PC-3 (cell line): ENCODE measurements at regions of chr17 and their contacts with region 1.

Region 1: GRCh38 chr17:42760652-42761581 is at the start of gene RAMP2:
- DNase-seq: no peak
- ATAC-seq: peak; percentile 49
- H3K4me3 ChIP-seq: peak within 1 kb of the TSS; percentile 49; the same call in 1 of the 2 replicates
- H3K27ac ChIP-seq: no peak within 1 kb of the TSS
- H3K4me1 ChIP-seq: no peaks in the 10 kb centered on the region; the same call in 1 of the 2 replicates
- H3K27me3 ChIP-seq: no peaks in the 10 kb centered on the region
- CTCF ChIP-seq: no peak
- total RNA-seq, gene RAMP2: not detected in 2 replicates

Region 2: GRCh38 chr17:42598905-42599304 is 162.0 kb before region 1 on chr17:
- CTCF ChIA-PET with region 1: no interaction called
- POLR2A ChIA-PET with region 1: no interaction called
- intact Hi-C with region 1: no loop called
- DNase-seq: no peak
- ATAC-seq: no peak
- H3K4me3 ChIP-seq: no peak overlapping the region
- H3K27ac ChIP-seq: no peak overlapping the region
- H3K4me1 ChIP-seq: no peaks in the 10 kb centered on the region
- H3K27me3 ChIP-seq: no peaks in the 10 kb centered on the region
- CTCF ChIP-seq: no peak

Region 3: GRCh38 chr17:42744806-42745617 is 15.9 kb before region 1 on chr17 and contains the start of gene EZH1:
- CTCF ChIA-PET with region 1: interaction called, 4 read pairs
- POLR2A ChIA-PET with region 1: no interaction called
- intact Hi-C with region 1: loop called (anchors 1 kb)
- DNase-seq: peak; percentile 88
- ATAC-seq: peak; percentile 90
- H3K4me3 ChIP-seq: peak within 1 kb of the TSS; percentile 65
- H3K27ac ChIP-seq: peak within 1 kb of the TSS; percentile 46
- H3K4me1 ChIP-seq: peaks cover 7% of the 10 kb centered on the region
- H3K27me3 ChIP-seq: no peaks in the 10 kb centered on the region
- CTCF ChIP-seq: no peak
- total RNA-seq, gene EZH1: 5.8 and 13.7 TPM in 2 replicates

Region 4: GRCh38 chr17:42850954-42851353 is 90.0 kb after region 1 on chr17 and contains the start of gene AOC3:
- CTCF ChIA-PET with region 1: no interaction called
- POLR2A ChIA-PET with region 1: no interaction called
- intact Hi-C with region 1: no loop called
- DNase-seq: no peak
- ATAC-seq: no peak
- H3K4me3 ChIP-seq: no peak within 1 kb of the TSS
- H3K27ac ChIP-seq: no peak within 1 kb of the TSS
- H3K4me1 ChIP-seq: no peaks in the 10 kb centered on the region
- H3K27me3 ChIP-seq: no peaks in the 10 kb centered on the region
- CTCF ChIP-seq: no peak
- total RNA-seq, gene AOC3: 0.26 and 0.35 TPM in 2 replicates